HEK293 (cell line): ENCODE measurements at regions of chr1 and their contacts with region 1.

Region 1: DNA sequence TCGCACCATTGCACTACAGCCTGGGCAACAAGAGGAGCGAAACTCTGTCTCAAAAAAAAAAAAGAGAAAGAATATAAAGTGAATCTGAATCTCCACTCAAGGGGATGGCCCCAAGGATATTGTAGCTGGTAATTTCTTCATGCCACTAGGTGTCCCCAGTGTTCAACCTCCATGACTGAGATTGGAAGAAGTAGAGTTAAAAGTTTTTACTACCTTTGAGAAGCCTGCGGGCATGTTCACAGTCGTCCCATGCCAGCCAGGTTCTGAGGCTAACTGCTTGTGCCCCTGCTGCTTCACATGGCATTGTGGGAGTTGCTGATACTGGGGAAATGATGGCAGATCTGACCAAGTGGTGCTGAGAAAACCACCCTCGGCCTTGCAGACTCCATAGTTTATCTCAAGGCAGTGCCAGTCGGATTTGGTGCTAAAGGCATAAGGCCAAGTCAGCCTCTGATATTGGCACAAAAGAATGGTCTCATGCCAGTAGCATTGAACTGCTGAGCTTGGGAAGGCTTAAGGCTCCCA is 10.8 kb upstream of the SHISA4 start:
- H3K4me3 ChIP-seq: no peak overlapping the region
- H3K27ac ChIP-seq: no peak overlapping the region
- H3K4me1 ChIP-seq: no peaks in the 10 kb centered on the region
- CTCF ChIP-seq: peak; percentile 47; the same call in 1 of the 2 replicates

Region 2: GRCh38 chr1:201970334-201971159 is 92.6 kb after region 1 on chr1:
- CTCF ChIA-PET with region 1: interaction called, 22 read pairs
- POLR2A ChIA-PET with region 1: no interaction called
- H3K4me3 ChIP-seq: no peak overlapping the region
- H3K27ac ChIP-seq: no peak overlapping the region
- H3K4me1 ChIP-seq: peaks cover 13% of the 10 kb centered on the region
- CTCF ChIP-seq: no peak